ENCODE measurements at regions of chr6 and their contacts with region 1.

Region 1: GRCh38 chr6:149316798-149317655 is 485 bp upstream of the TAB2 start:
- DNase-seq: peak; percentile 96
- ATAC-seq: peak; percentile 74
- H3K4me3 ChIP-seq: peak overlapping the region; percentile 77 to 91 (median 85)
- H3K4me3 Mint-ChIP-seq: peak overlapping the region; percentile 88
- H3K27ac ChIP-seq: peak overlapping the region; percentile 86 to 91
- H3K27ac Mint-ChIP-seq: peak overlapping the region; percentile 88
- H3K4me1 ChIP-seq: peaks cover 14 to 30% of the 10 kb centered on the region in 2 donors
- H3K4me1 Mint-ChIP-seq: peaks cover 27% of the 10 kb centered on the region
- H3K27me3 ChIP-seq: no peaks in the 10 kb centered on the region
- H3K27me3 Mint-ChIP-seq: no peaks in the 10 kb centered on the region
- CTCF ChIP-seq: no peak

Region 2: GRCh38 chr6:149028767-149029405 is 288.1 kb before region 1 on chr6:
- CTCF ChIA-PET with region 1: interaction called, 4 read pairs
- POLR2A ChIA-PET with region 1: no interaction called
- intact Hi-C with region 1: loop called (anchors 1 kb)
- DNase-seq: peak; percentile 88
- ATAC-seq: peak; percentile 53
- H3K4me3 ChIP-seq: no peak overlapping the region
- H3K4me3 Mint-ChIP-seq: no peak overlapping the region
- H3K27ac ChIP-seq: no peak overlapping the region
- H3K27ac Mint-ChIP-seq: no peak overlapping the region
- H3K4me1 ChIP-seq: peaks cover 3 to 19% of the 10 kb centered on the region in 2 donors
- H3K4me1 Mint-ChIP-seq: peaks cover 28% of the 10 kb centered on the region
- H3K27me3 ChIP-seq: no peaks in the 10 kb centered on the region
- H3K27me3 Mint-ChIP-seq: no peaks in the 10 kb centered on the region
- CTCF ChIP-seq: peak; percentile 92

Region 3: GRCh38 chr6:149271348-149272340 is 45.4 kb before region 1 on chr6:
- CTCF ChIA-PET with region 1: interaction called, 3 read pairs
- POLR2A ChIA-PET with region 1: interaction called, 3 read pairs
- intact Hi-C with region 1: loop called (anchors 2 kb)
- DNase-seq: peak; percentile 72
- ATAC-seq: peak; percentile 86
- H3K4me3 ChIP-seq: peak overlapping the region in 4 of 5 experiments; percentile 19 to 42 (median 36)
- H3K4me3 Mint-ChIP-seq: peak overlapping the region; percentile 81
- H3K27ac ChIP-seq: peak overlapping the region; percentile 81 to 84
- H3K27ac Mint-ChIP-seq: peak overlapping the region; percentile 99
- H3K4me1 ChIP-seq: peaks cover 54 to 59% of the 10 kb centered on the region in 2 donors
- H3K4me1 Mint-ChIP-seq: peaks cover 58% of the 10 kb centered on the region
- H3K27me3 ChIP-seq: no peaks in the 10 kb centered on the region
- H3K27me3 Mint-ChIP-seq: no peaks in the 10 kb centered on the region
- CTCF ChIP-seq: no peak

Region 4: DNA sequence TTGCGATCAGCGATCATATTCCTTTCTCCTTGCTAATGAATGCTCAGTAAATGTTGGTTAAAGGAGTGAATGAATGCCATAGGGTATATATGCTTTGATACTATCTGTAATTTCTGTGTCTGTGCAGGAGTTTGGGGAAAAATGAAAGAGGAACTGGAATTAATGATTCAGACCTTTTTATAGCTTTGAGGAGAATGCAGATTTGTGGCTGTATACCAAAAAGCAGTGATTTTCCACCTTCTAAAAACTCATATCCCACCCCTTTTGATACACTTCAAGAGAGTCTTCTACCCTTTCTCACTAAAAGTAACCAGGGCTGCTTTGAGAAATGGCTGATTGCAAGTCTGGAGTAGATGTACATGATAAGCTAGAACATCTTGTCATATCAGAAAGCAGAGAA is 56.5 kb after region 1 on chr6:
- CTCF ChIA-PET with region 1: no interaction called
- POLR2A ChIA-PET with region 1: interaction called, 3 read pairs
- intact Hi-C with region 1: loop called (anchors 5 kb)
- DNase-seq: no peak
- ATAC-seq: peak; percentile 21
- H3K4me3 ChIP-seq: no peak overlapping the region
- H3K4me3 Mint-ChIP-seq: peak overlapping the region; percentile 11
- H3K27ac ChIP-seq: no peak overlapping the region
- H3K27ac Mint-ChIP-seq: peak overlapping the region; percentile 8
- H3K4me1 ChIP-seq: peaks cover 22 to 24% of the 10 kb centered on the region in 2 donors
- H3K4me1 Mint-ChIP-seq: peaks cover 38% of the 10 kb centered on the region
- H3K27me3 ChIP-seq: no peaks in the 10 kb centered on the region
- H3K27me3 Mint-ChIP-seq: no peaks in the 10 kb centered on the region
- CTCF ChIP-seq: no peak

Region 5: GRCh38 chr6:149717588-149718458 is 400.8 kb after region 1 on chr6 and contains the start of gene LATS1:
- CTCF ChIA-PET with region 1: no interaction called
- POLR2A ChIA-PET with region 1: no interaction called
- intact Hi-C with region 1: loop called (anchors 5 kb)
- DNase-seq: peak; percentile 91
- ATAC-seq: peak; percentile 92
- H3K4me3 ChIP-seq: peak within 1 kb of the TSS; percentile 80 to 92 (median 86)
- H3K4me3 Mint-ChIP-seq: peak within 1 kb of the TSS; percentile 91
- H3K27ac ChIP-seq: peak within 1 kb of the TSS; percentile 79 to 92
- H3K27ac Mint-ChIP-seq: peak within 1 kb of the TSS; percentile 95
- H3K4me1 ChIP-seq: peaks cover 23% of the 10 kb centered on the region in 2 donors
- H3K4me1 Mint-ChIP-seq: peaks cover 33% of the 10 kb centered on the region
- H3K27me3 ChIP-seq: no peaks in the 10 kb centered on the region
- H3K27me3 Mint-ChIP-seq: no peaks in the 10 kb centered on the region
- CTCF ChIP-seq: no peak
- total RNA-seq, gene LATS1: 48.0 and 54.0 TPM in 2 replicates

Measured in B cell (primary cell).